HEK293 (cell line): ENCODE measurements at regions of chr7 and their contacts with region 1.

Region 1: GRCh38 chr7:151368136-151368571 is 26.5 kb downstream of the NUB1 start:
- H3K4me3 ChIP-seq: no peak overlapping the region
- H3K27ac ChIP-seq: no peak overlapping the region
- H3K4me1 ChIP-seq: no peaks in the 10 kb centered on the region
- CTCF ChIP-seq: peak; percentile 85

Region 2: DNA sequence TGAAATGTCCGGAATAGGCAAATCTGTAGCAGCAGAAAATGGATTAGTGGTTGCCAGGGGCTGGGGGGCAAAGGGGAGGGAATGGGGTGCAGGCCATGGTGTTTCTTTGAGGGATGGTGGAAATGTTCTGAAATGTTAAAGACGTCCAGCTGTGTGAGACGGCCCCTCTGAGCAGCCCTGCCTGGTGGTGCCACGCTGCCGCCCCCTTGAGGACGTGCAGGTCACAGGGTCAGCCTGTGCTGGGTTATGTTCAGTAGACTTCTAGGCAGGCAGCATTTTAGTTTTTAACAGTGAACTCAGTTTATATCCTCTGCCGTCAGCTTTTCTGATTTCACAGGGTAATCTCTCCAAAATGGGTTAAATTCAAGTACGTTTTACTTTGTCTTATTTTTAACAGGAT is 17.1 kb before region 1 on chr7:
- CTCF ChIA-PET with region 1: interaction called, 18 read pairs
- POLR2A ChIA-PET with region 1: no interaction called
- H3K4me3 ChIP-seq: no peak overlapping the region
- H3K27ac ChIP-seq: no peak overlapping the region
- H3K4me1 ChIP-seq: no peaks in the 10 kb centered on the region
- CTCF ChIP-seq: no peak